HepG2 (cell line): ENCODE measurements at regions of chr22 and their contacts with region 1.

Region 1: DNA sequence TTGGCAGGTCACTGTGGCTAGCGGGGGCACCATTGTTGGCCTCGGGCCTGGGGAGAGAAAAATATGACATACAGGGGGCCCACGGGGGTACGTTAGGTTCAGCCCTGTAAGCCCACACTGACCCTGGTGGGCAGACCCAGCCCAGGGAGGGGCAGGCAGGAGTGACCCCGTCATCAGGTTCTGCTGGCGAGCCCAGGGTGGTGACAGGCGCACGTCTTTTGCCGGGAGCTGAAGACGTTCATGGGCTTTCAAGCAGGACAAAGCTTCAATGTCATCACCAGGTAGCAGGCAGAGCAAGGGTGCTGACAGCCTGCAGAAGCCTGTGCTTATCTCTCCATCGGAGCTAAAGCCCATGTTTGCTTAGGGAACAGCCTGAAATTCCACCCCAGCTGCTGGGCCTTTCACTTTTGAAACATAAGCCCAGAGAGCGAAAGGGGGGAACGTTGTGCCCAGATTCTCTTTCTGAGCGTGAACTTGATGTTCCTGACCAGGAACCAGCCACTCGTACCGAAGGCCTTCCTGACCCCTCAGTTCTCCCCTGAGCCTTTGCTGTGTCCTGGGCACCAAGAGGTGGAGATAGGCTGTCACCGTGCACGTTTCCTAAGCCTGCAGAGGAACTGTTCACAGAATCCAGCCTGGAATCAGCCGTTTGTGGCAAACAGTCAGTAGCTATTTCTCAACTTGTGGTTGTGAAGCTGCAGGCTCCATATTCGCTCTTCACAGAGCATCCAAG is 74.0 kb upstream of the ATXN10 start:
- DNase-seq: peak; percentile 86
- ATAC-seq: peak; percentile 95
- H3K4me3 ChIP-seq: peak overlapping the region; percentile 5 to 64 (median 41); a peak in 5 of 6 replicates
- H3K27ac ChIP-seq: peak overlapping the region; percentile 37
- H3K4me1 ChIP-seq: peaks cover 19% of the 10 kb centered on the region
- H3K27me3 ChIP-seq: no peaks in the 10 kb centered on the region
- CTCF ChIP-seq: no peak; the same call in 1 of the 2 replicates
- EP300 ChIP-seq: peak in 1 of 2 experiments; percentile 51; a peak in 2 of 4 replicates
- POLR2A ChIP-seq: no peak
- RAD21 ChIP-seq: no peak

Region 2: GRCh38 chr22:45626198-45626651 is 28.6 kb after region 1 on chr22:
- CTCF ChIA-PET with region 1: no interaction called
- POLR2A ChIA-PET with region 1: no interaction called
- in situ Hi-C with region 1: no loop called
- intact Hi-C with region 1: loop called (anchors 2 kb)
- DNase-seq: peak; percentile 55
- ATAC-seq: no peak
- H3K4me3 ChIP-seq: peak overlapping the region in 1 of 3 experiments; percentile 28; a peak in 1 of 6 replicates
- H3K27ac ChIP-seq: no peak overlapping the region
- H3K4me1 ChIP-seq: peaks cover 66% of the 10 kb centered on the region
- H3K27me3 ChIP-seq: peaks cover 1 to 17% of the 10 kb centered on the region in 2 experiments; a peak in 3 of 5 replicates
- CTCF ChIP-seq: no peak
- EP300 ChIP-seq: no peak
- POLR2A ChIP-seq: no peak
- RAD21 ChIP-seq: no peak

Region 3: DNA sequence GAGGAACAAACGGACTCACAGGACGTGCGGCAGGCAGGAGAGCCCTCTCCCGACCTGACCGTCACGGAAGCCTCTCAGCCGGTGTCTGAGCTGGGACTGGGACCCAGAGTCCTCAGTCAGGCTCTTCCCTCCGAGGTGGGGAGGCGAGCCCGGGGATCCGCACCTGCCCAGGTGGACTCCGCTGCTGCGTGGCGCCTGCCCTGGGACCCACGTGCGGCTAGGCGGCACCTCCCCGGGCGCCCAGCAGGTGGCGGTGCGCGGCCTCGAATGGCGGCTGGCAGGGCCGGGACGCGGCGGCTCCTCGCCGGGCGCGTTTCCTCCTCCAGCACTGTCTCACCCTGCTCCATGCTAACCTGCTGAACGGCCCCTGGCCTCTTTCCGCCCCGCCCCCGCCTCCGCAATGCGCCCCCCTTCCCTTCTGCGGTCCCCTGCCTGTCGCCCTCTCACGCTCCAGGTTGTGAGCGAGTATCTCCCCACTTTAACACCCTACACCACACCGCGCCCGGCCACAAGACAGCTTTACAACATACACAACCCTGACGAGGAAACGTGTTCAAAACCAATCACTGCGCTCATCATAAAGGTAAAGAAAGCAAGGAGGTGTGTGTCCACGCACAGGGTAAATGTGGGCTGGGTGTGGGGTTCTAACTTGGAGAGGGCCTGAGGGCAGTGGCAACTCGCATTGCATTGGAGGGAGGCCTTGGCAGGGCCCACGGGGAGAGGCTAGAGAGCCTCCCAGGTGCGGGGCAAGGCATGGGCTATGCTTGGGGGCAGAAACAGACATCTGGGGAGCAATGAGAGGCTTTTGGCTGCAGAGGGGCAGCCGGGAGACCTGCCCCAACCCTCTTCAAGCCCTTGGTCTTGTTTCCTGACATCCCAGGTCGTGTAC is 48.1 kb after region 1 on chr22:
- CTCF ChIA-PET with region 1: no interaction called
- POLR2A ChIA-PET with region 1: no interaction called
- in situ Hi-C with region 1: no loop called
- intact Hi-C with region 1: no loop called
- DNase-seq: no peak
- ATAC-seq: peak; percentile 96
- H3K4me3 ChIP-seq: peak overlapping the region; percentile 45 to 70 (median 58); a peak in 5 of 6 replicates
- H3K27ac ChIP-seq: no peak overlapping the region
- H3K4me1 ChIP-seq: peaks cover 57% of the 10 kb centered on the region
- H3K27me3 ChIP-seq: no peaks in the 10 kb centered on the region; a peak in 1 of 5 replicates
- CTCF ChIP-seq: peak; percentile 90
- EP300 ChIP-seq: no peak
- POLR2A ChIP-seq: no peak
- RAD21 ChIP-seq: peak; percentile 99